ENCODE measurements at regions of chr3 and their contacts with region 1.

Region 1: GRCh38 chr3:57078344-57078634 is 17.8 kb downstream of the SPATA12 start:
- DNase-seq: peak; percentile 40
- H3K4me3 Mint-ChIP-seq: peak overlapping the region; percentile 55
- H3K27ac Mint-ChIP-seq: no peak overlapping the region
- H3K4me1 Mint-ChIP-seq: peaks cover 4% of the 10 kb centered on the region
- H3K27me3 Mint-ChIP-seq: peaks cover 43% of the 10 kb centered on the region

Region 2: DNA sequence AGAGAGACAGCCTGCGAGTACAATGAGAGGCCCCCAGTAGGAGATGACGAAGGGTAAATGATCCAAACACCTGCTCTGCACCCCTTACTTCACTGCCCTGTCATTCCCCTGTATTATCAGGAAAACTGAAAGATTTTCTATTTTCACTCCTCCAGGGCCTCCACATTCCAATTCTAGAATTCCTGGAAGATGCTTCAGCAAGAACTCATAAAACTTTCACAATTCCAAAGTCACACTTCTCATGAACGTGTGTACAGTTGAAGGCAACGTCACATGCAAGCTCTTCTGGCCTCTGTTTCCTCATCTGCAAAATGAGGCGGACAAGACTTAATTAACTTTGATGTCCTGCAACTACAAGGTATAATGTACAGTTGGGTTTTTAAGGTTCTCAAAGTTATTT is 80.6 kb before region 1 on chr3:
- CTCF ChIA-PET with region 1: interaction called, 3 read pairs
- intact Hi-C with region 1: loop called (anchors 5 kb)
- DNase-seq: no peak
- H3K4me3 Mint-ChIP-seq: no peak overlapping the region
- H3K27ac Mint-ChIP-seq: no peak overlapping the region
- H3K4me1 Mint-ChIP-seq: peaks cover 3% of the 10 kb centered on the region
- H3K27me3 Mint-ChIP-seq: no peaks in the 10 kb centered on the region

Measured in activated naive CD4-positive, alpha-beta T cell treated with anti-CD3 and anti-CD28 coated beads for 36 hours (primary cell).